Adrenal gland (tissue), 19 donors: ENCODE measurements at regions of chr12 and their contacts with region 1.

Region 1: DNA sequence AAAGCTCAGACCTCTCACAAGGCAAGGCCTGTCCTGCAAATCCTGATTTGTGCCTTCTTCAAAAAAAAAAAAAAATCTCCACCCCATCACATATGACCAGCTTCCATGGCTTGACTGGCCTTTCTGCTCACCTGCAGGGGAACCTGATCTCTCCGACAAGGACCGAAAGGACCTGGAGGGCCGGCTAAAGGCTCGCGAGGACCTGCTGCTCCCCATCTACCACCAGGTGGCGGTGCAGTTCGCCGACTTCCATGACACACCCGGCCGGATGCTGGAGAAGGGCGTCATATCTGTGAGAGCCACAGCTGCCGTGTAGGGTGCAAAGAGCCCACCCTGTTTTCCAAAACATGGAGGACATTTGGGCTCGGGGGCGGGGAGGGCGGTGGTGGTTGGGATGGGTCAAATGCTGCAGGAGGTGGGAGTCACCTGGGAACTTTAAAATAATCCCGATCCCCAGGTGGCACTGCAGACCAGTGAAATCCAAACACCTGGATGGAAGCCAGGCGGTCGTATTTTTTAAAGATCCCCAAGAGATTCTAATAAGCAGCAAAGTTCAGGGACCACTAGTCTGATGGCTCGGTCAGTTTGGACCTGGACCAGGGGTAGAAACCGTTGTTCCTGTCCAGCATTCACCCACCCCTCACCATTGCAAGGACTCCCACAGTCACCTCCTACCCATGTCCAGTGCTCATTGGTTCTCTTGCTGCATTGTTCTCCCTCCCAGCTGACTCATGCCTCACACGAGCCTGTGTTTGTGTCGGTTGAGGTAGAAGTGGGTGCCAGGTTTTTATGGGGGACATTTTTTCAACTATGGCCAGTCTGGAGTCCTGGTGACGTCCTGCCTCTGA is 44.8 kb downstream of the FOXN4 start:
- DNase-seq: peak; percentile 73 to 91 (median 80)
- H3K4me3 ChIP-seq: no peak overlapping the region
- H3K27ac ChIP-seq: peak overlapping the region in 2 of 5 donors; percentile 34 to 65
- H3K4me1 ChIP-seq: no peaks in the 10 kb centered on the region
- H3K27me3 ChIP-seq: no peaks in the 10 kb centered on the region
- CTCF ChIP-seq: peak; percentile 68 to 82 (median 72)
- POLR2A ChIP-seq: no peak

Region 2: GRCh38 chr12:109052414-109053323 is 211.7 kb before region 1 on chr12 and contains the start of gene USP30:
- intact Hi-C with region 1: no loop called
- DNase-seq: peak; percentile 82 to 93 (median 86)
- H3K4me3 ChIP-seq: peak within 1 kb of the TSS; percentile 60 to 89 (median 68)
- H3K27ac ChIP-seq: peak within 1 kb of the TSS; percentile 57 to 92 (median 80)
- H3K4me1 ChIP-seq: peaks cover 13 to 21% of the 10 kb centered on the region in 2 donors
- H3K27me3 ChIP-seq: no peaks in the 10 kb centered on the region
- CTCF ChIP-seq: peak in 1 of 6 experiments; percentile 26
- POLR2A ChIP-seq: peak; percentile 38 to 74
- total RNA-seq, gene USP30: 21.0 to 36.1 (median 24.4) TPM

Region 3: DNA sequence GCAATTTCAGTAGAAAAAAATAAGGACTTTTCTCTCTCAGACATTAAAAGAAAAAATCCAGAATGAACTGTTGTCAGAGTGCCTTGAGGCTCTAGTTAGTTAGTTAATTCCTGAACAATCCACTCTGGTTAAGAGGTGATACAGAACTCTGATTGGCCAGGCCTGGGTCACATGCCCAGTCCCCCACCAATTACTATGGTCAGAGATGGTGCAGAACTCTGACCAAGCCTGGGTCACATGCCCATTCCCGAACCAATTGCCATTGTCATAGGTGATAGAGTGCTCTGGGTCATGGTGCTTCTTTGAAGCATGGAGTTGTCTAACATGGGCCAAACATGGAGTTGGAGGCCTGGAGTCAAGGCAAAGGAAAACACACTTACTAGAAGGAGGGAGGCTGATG is 72.3 kb after region 1 on chr12:
- intact Hi-C with region 1: no loop called
- DNase-seq: no peak
- H3K4me3 ChIP-seq: no peak overlapping the region
- H3K27ac ChIP-seq: no peak overlapping the region
- H3K4me1 ChIP-seq: no peaks in the 10 kb centered on the region
- H3K27me3 ChIP-seq: peaks cover 3% of the 10 kb centered on the region
- CTCF ChIP-seq: no peak
- POLR2A ChIP-seq: no peak

Region 4: DNA sequence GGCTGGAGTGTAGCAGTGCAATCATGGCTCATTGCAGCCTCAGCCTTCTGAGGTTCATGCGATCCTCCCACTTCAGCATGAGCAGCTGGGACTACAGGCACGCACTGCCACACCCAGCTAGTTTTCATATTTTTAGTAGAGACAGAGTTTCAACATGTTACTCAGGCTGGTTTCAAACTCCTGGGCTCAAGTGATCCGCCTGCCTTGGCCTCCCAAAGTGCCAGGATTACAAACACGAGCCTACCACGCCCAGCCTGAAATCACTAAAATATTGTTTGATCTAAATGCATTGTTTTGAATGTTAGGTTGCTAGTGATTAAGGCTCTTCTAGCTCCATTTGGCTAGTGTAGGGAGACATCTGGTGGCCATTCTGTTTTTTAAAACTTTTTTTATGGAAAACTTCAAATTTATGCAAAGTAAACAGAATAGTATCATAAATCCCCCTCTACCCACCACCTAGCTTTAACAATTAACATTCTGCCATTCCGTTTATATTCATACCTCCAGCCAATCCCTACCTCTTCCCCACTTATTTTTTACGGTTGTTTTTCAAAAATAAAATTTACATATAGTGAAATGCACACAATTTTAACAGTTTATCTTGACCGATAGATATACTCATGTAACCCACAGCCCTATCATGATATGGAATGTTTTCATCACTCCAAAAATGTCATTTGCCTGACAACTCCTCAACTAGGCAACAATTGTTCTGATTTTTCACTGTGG is 121.2 kb after region 1 on chr12:
- intact Hi-C with region 1: loop called (anchors 2 to 5 kb)
- DNase-seq: peak in 1 of 7 donors; percentile 16
- H3K4me3 ChIP-seq: no peak overlapping the region
- H3K27ac ChIP-seq: no peak overlapping the region
- H3K4me1 ChIP-seq: no peaks in the 10 kb centered on the region
- H3K27me3 ChIP-seq: peaks cover 6% of the 10 kb centered on the region
- CTCF ChIP-seq: peak; percentile 41 to 71 (median 53)
- POLR2A ChIP-seq: no peak

Region 5: DNA sequence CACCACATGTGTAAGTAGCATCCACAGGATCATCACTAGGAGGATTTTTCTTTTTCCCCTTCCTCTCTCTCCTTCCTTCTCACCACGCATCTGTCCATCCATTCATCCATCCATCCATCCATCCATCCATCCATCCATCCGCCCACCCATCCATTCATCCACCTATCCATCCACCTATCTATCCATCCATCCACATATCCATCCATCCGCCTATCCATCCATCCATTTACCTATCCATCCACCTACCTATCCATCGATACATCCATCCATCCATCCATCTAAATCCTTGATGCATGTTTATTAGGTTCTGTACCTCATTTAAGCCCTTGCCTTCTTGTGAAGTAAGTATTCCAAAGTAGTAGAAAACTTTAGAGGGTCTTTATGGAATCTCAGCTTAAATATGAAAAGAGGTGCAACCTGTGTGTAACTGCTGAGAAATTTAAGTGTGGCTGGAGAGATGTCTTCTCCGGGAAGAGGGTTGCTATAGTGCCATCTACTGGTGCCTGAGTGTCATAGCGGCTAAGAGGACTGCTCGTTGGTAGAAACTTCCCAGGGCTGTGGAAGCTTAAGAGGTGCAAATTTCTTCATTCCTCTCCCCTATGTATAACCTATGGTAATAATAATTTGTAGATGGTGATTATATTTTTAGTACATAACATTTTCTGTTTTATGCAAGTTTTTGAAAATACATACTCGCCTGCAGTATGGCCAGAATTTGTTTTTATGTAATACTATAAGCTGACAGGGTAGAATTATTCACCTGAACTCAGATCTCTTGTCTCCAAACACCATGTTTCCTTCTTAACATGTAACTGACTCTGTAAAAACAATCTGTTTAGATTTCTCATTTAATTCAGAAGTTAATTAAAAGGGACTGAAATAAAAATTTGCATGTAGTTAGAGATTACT is 129.4 kb after region 1 on chr12:
- intact Hi-C with region 1: loop called in 1 of 2 experiments (anchors 2 kb)
- DNase-seq: peak; percentile 35 to 73 (median 50)
- H3K4me3 ChIP-seq: no peak overlapping the region
- H3K27ac ChIP-seq: no peak overlapping the region
- H3K4me1 ChIP-seq: no peaks in the 10 kb centered on the region
- H3K27me3 ChIP-seq: no peaks in the 10 kb centered on the region
- CTCF ChIP-seq: peak; percentile 47 to 82 (median 60)
- POLR2A ChIP-seq: no peak